Activated T-helper 1 cell treated with anti-CD3 and anti-CD28 coated beads, Interleukin-12 subunit alpha, Interleukin-12 subunit beta, Interleukin-2, Interleukin-4 antibody, amounts not matched to agents 30 ng/mL and 10 ng/mL and 1 ng/mL, durations not matched to agents 14 hours and 24 hours and 36 hours (primary cell): ENCODE measurements at regions of chr3 and their contacts with region 1.

Region 1: DNA sequence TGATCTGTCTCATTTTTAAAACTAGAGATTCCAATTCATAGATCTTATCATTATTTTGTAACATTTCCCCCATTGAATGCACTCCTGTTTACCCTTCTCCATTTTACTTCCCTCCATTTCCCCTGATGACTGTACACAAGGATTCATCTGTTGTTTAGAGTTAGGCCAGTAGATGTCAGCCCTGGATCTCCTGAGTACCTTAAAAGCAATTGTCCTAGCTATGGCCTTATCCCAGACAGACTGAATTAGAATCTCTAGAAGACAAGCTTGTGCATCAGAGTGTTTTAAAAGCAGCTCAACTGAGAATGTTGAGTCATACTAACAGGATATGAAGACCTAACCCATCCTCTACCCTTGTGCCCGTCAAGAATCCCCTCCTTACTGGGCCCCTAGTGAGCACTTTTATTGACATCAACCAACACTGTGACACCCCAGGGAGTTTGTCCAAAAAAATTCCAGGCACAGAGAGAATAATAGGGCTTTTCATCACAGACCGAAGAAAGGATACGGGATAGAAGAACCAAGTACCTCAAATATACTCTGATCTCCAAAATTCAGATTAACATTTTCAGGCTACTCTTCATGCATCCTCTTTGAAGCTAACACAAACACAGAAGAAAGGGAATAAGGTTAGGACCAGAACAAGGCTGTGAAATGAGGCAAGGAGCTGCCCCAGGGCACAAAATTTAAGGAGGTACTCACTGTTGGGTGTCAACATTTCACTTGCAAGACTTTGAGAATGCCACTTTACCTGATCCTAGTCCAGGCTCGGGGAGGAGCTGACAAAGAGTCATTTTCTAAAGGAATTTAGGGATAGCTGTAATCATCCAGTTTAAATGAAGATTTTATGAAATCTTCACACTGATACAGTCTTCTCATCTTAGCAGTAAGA is 17.1 kb downstream of the ZBED2 start:
- DNase-seq: no peak
- H3K4me3 Mint-ChIP-seq: peak overlapping the region; percentile 1
- H3K27ac Mint-ChIP-seq: peak overlapping the region; percentile 70
- H3K4me1 Mint-ChIP-seq: peaks cover 82% of the 10 kb centered on the region
- H3K27me3 Mint-ChIP-seq: no peaks in the 10 kb centered on the region

Region 2: GRCh38 chr3:111595232-111595631 is 17.2 kb after region 1 on chr3 and contains the start of gene ZBED2:
- intact Hi-C with region 1: loop called (anchors 1 kb)
- DNase-seq: no peak
- H3K4me3 Mint-ChIP-seq: peak within 1 kb of the TSS; percentile 97
- H3K27ac Mint-ChIP-seq: peak within 1 kb of the TSS; percentile 99
- H3K4me1 Mint-ChIP-seq: peaks cover 65% of the 10 kb centered on the region
- H3K27me3 Mint-ChIP-seq: no peaks in the 10 kb centered on the region
- total RNA-seq, gene ZBED2: 812 and 827 TPM in 2 replicates

Region 3: GRCh38 chr3:111616417-111617105 is 38.5 kb after region 1 on chr3:
- intact Hi-C with region 1: loop called (anchors 1 kb)
- DNase-seq: peak; percentile 61
- H3K4me3 Mint-ChIP-seq: peak overlapping the region; percentile 70
- H3K27ac Mint-ChIP-seq: peak overlapping the region; percentile 98
- H3K4me1 Mint-ChIP-seq: peaks cover 84% of the 10 kb centered on the region
- H3K27me3 Mint-ChIP-seq: no peaks in the 10 kb centered on the region

Region 4: GRCh38 chr3:111691293-111691909 is 113.4 kb after region 1 on chr3:
- intact Hi-C with region 1: loop called (anchors 1 kb)
- DNase-seq: no peak
- H3K4me3 Mint-ChIP-seq: no peak overlapping the region
- H3K27ac Mint-ChIP-seq: no peak overlapping the region
- H3K4me1 Mint-ChIP-seq: peaks cover 73% of the 10 kb centered on the region
- H3K27me3 Mint-ChIP-seq: no peaks in the 10 kb centered on the region

Region 5: DNA sequence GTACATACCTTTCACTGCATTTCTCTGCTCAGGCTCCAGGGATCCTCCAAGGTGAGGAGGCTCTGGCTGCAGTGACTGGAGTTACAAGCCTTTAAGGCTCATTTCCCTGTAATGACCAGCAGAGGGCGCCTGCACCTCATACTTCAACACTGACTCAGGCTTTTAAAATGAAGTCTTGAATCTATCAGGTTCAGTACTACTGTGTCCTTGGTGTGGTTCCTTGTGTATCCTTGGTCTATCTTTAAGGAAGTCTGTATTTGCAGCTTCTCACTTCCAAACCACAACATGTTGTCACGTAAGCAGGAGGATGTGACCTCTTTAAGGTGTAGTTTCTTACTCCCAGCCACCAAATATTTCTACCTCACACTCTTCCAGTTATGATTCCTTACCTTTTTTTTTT is 139.6 kb after region 1 on chr3:
- intact Hi-C with region 1: loop called (anchors 1 kb)
- DNase-seq: peak; percentile 44
- H3K4me3 Mint-ChIP-seq: no peak overlapping the region
- H3K27ac Mint-ChIP-seq: peak overlapping the region; percentile 70
- H3K4me1 Mint-ChIP-seq: peaks cover 8% of the 10 kb centered on the region
- H3K27me3 Mint-ChIP-seq: no peaks in the 10 kb centered on the region

Region 6: GRCh38 chr3:111967651-111968274 is 389.7 kb after region 1 on chr3:
- intact Hi-C with region 1: no loop called
- DNase-seq: peak; percentile 57
- H3K4me3 Mint-ChIP-seq: no peak overlapping the region
- H3K27ac Mint-ChIP-seq: no peak overlapping the region
- H3K4me1 Mint-ChIP-seq: peaks cover 29% of the 10 kb centered on the region
- H3K27me3 Mint-ChIP-seq: no peaks in the 10 kb centered on the region